Gastrocnemius medialis (tissue), 4 donors: ENCODE measurements at regions of chr4 and their contacts with region 1.

Region 1: DNA sequence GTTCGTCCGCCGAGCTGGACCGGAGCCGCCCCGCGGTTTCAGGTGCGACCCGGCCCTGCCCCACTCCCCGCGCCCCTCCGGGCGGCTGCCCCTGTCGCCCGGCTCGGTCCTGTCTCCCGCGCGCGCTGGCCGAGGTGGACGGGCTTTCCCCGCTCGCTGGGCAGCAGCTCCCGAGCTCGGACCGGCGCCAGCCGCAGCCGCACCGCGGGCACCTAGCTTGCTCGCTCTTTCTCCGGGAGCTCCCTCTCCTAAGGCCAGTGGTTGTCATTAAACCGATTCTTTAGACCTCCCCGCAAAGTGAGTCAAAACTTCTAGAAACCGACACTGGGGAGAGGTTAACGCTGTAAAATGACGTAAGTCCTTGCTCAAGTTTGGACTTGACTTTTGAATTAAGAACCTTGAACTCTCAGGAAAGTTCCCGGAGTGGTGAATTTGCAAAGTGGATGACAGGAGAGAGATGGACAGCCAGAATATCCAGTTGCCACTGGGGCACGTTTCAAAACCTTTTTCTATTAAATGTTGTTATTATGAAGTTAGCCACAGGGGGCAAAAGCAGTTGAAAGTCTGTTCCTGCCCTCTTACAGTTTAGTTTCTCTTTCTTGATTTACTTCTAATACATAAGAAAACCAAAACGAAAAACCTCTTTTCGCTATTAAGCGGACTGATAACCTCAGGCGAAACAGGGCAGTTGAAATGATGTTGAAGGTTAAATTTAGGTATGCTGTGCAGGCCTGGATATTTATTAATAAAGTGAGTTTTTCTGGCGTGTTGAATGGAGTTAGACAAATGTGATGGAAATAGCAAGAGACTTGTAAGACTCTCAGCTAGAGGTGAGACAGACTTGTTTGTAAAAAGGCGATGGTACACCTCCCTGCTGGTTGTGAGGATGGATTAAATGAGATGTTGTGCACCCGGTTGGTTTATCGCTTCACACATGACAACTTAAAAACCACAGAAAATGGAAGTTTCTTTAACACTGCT is 847 bp downstream of the PI4K2B start:
- DNase-seq: peak; percentile 18 to 42
- ATAC-seq: peak; percentile 72 to 76
- H3K4me3 ChIP-seq: peak overlapping the region; percentile 78 to 92 (median 80)
- H3K27ac ChIP-seq: peak overlapping the region; percentile 89 to 98 (median 94)
- H3K4me1 ChIP-seq: peaks cover 3 to 11% of the 10 kb centered on the region in 2 donors
- H3K27me3 ChIP-seq: no peaks in the 10 kb centered on the region
- CTCF ChIP-seq: peak in 3 of 5 experiments; percentile 40 to 49 (median 42)
- POLR2A ChIP-seq: no peak

Region 2: DNA sequence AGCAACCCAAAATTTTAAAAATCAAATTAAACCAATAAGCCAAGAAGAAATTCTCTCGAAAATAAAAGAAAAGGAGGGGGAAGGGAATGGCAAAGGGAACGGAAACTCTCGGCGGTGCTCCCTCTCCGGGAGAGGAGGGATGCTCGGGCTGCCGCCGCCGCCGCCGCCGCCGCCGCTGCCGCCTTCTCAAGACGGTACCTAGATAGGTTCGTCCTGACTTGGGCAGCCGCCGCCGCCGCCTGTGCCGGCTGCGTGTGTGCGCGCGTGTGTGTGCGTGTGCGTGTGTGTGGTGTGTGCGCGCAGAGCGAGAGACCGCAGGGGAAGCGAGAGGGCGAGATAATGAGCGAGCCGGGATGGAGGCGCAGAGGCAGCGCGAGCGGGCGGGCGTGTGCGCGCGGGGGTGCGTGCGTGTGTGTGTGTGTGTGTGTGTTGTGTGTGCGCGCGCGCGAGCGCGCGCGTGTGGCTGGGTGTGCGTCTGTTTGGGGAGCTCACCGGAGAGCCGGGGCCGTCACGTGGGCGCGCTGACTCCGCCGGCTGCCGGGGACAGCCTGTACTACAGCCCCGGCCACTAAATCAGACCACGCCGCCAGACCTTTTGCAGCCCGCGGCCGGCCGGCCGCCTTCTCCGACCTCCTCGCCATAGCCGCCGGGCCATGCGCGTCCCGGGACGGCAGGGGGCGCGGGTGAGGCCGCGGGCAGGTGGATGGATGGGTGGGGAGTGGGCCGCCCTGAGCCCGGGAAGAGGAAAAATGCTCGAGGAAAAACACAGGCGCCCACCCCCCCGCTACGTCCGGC is 762.0 kb before region 1 on chr4:
- in situ Hi-C with region 1: no loop called
- intact Hi-C with region 1: loop called (anchors 2 kb)
- DNase-seq: peak; percentile 79 to 82
- ATAC-seq: peak; percentile 83 to 84
- H3K4me3 ChIP-seq: peak overlapping the region; percentile 67 to 81 (median 71)
- H3K27ac ChIP-seq: peak overlapping the region; percentile 71 to 84 (median 81)
- H3K4me1 ChIP-seq: peaks cover 10 to 20% of the 10 kb centered on the region in 2 donors
- H3K27me3 ChIP-seq: peaks cover 0 to 4% (median 3%) of the 10 kb centered on the region in 3 donors
- CTCF ChIP-seq: peak; percentile 74 to 87 (median 78)
- POLR2A ChIP-seq: peak in 1 of 2 donors; percentile 55

Region 3: GRCh38 chr4:25159884-25160713 is 74.6 kb before region 1 on chr4 and contains the start of gene SEPSECS:
- in situ Hi-C with region 1: no loop called
- intact Hi-C with region 1: loop called (anchors 1 kb)
- DNase-seq: peak; percentile 96 to 97
- ATAC-seq: peak; percentile 97
- H3K4me3 ChIP-seq: peak within 1 kb of the TSS; percentile 78 to 98 (median 82)
- H3K27ac ChIP-seq: peak within 1 kb of the TSS; percentile 91 to 96 (median 93)
- H3K4me1 ChIP-seq: peaks cover 22 to 23% of the 10 kb centered on the region in 2 donors
- H3K27me3 ChIP-seq: no peaks in the 10 kb centered on the region
- CTCF ChIP-seq: no peak
- POLR2A ChIP-seq: peak in 1 of 2 donors; percentile 59
- total RNA-seq, gene SEPSECS: 3.9 to 6.7 (median 4.7) TPM

Region 4: DNA sequence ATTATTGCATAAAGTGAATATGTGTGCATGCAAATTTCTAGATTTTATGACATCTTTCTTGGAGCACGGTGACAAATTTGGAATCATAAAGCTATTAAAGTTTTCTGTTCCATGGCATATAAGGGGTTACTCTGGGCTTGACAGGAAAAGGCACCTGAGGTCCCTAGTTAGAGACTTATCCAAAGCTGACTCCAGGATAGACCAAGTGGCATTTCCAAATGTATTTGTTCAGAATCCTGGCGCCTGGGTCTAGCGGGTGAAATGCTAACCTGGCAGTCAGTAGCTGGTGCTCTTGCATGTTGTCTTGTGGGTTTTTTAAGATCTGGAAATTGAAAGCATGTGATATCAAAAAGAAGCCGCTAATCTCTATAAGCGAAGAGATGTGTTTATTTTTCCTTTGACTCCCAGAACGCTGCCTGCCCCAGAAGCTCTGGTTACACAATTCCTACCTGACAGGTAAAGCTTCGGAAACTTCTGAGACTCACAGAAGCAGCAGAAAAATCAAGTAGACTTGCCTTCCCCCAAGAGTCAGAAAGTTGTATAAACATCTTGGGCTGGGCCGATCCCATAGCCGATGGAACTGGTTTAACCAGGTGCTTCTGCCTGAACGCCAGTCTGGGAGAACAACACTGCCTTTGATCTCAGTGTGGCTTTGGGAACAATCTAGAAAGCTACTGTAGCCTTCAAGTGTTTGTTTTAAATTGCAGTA is 65.0 kb after region 1 on chr4:
- in situ Hi-C with region 1: loop called in 2 of 4 experiments (anchors 10 kb)
- intact Hi-C with region 1: no loop called
- DNase-seq: no peak
- ATAC-seq: no peak
- H3K4me3 ChIP-seq: no peak overlapping the region
- H3K27ac ChIP-seq: no peak overlapping the region
- H3K4me1 ChIP-seq: no peaks in the 10 kb centered on the region
- H3K27me3 ChIP-seq: no peaks in the 10 kb centered on the region
- CTCF ChIP-seq: no peak
- POLR2A ChIP-seq: no peak

Region 5: GRCh38 chr4:25376754-25377571 is 142.3 kb after region 1 on chr4 and contains the start of gene ANAPC4:
- in situ Hi-C with region 1: no loop called
- intact Hi-C with region 1: loop called (anchors 5 kb)
- DNase-seq: peak; percentile 87 to 91
- ATAC-seq: peak; percentile 81 to 84
- H3K4me3 ChIP-seq: peak within 1 kb of the TSS; percentile 85 to 99 (median 92)
- H3K27ac ChIP-seq: peak within 1 kb of the TSS; percentile 77 to 83 (median 80)
- H3K4me1 ChIP-seq: peaks cover 3 to 8% of the 10 kb centered on the region in 2 donors
- H3K27me3 ChIP-seq: no peaks in the 10 kb centered on the region
- CTCF ChIP-seq: peak in 2 of 5 experiments; percentile 32 to 37
- POLR2A ChIP-seq: peak; percentile 38 to 56
- total RNA-seq, gene ANAPC4: 11.8 to 20.2 (median 14.7) TPM